ENCODE measurements at regions of chr3 and their contacts with region 1.

Region 1: GRCh38 chr3:138594150-138594934 is at the start of gene CEP70:
- DNase-seq: peak; percentile 96
- H3K4me3 ChIP-seq: peak within 1 kb of the TSS; percentile 65
- H3K27ac ChIP-seq: peak within 1 kb of the TSS; percentile 78
- H3K4me1 ChIP-seq: peaks cover 3% of the 10 kb centered on the region
- H3K27me3 ChIP-seq: no peaks in the 10 kb centered on the region
- CTCF ChIP-seq: peak; percentile 90
- total RNA-seq, gene CEP70: 25.6 and 30.8 TPM in 2 replicates

Region 2: DNA sequence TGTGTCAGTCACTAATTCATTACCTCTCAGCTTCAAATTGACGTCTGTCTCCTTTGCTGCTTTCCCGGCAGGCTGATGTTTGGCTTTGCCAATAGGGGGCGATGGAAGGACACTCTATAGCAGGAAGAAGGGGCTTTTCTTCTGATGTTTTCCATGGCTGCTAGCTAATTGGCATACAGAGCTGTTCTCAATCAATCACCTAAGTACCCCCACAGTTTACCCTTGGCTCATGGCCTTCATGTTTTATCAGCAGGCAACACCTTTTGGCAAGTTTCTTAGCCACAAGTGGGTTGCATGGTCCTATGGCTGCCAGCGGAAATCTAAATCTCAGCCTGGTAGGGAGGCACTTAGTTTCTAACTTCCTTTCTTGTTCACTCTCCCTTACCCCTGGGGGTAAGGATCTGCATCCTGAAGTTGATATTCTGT is 114.9 kb before region 1 on chr3:
- CTCF ChIA-PET with region 1: no interaction called
- POLR2A ChIA-PET with region 1: no interaction called
- intact Hi-C with region 1: loop called (anchors 5 kb)
- DNase-seq: peak; percentile 71
- H3K4me3 ChIP-seq: no peak overlapping the region
- H3K27ac ChIP-seq: no peak overlapping the region
- H3K4me1 ChIP-seq: no peaks in the 10 kb centered on the region
- H3K27me3 ChIP-seq: no peaks in the 10 kb centered on the region
- CTCF ChIP-seq: peak; percentile 92

Region 3: DNA sequence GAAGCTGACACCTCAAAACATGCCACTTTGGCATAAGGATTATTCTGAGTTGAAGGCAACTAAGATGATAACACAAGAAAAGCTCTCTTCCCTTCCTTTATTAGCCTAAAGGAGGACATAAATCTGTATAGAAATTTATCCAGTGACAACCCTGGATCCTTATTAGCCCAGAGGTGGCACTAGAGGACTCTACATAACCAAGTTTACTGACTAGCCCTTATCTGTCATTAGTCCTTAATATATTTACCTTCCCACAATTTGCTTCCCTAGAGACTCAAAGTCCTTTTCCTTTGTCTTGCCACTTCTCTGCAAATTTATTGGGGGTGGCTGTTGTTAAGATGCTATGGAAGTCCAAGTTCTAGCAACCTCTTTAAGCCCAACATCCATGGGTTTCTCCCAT is 26.9 kb before region 1 on chr3:
- CTCF ChIA-PET with region 1: no interaction called
- POLR2A ChIA-PET with region 1: no interaction called
- intact Hi-C with region 1: no loop called
- DNase-seq: no peak
- H3K4me3 ChIP-seq: no peak overlapping the region
- H3K27ac ChIP-seq: no peak overlapping the region
- H3K4me1 ChIP-seq: no peaks in the 10 kb centered on the region
- H3K27me3 ChIP-seq: no peaks in the 10 kb centered on the region
- CTCF ChIP-seq: no peak

Region 4: GRCh38 chr3:138915503-138916498 is 321.5 kb after region 1 on chr3:
- CTCF ChIA-PET with region 1: interaction called, 38 read pairs
- POLR2A ChIA-PET with region 1: interaction called, 7 read pairs
- intact Hi-C with region 1: loop called (anchors 1 kb)
- DNase-seq: peak; percentile 92
- H3K4me3 ChIP-seq: peak overlapping the region; percentile 86
- H3K27ac ChIP-seq: peak overlapping the region; percentile 77
- H3K4me1 ChIP-seq: no peaks in the 10 kb centered on the region
- H3K27me3 ChIP-seq: no peaks in the 10 kb centered on the region
- CTCF ChIP-seq: peak; percentile 84

Region 5: DNA sequence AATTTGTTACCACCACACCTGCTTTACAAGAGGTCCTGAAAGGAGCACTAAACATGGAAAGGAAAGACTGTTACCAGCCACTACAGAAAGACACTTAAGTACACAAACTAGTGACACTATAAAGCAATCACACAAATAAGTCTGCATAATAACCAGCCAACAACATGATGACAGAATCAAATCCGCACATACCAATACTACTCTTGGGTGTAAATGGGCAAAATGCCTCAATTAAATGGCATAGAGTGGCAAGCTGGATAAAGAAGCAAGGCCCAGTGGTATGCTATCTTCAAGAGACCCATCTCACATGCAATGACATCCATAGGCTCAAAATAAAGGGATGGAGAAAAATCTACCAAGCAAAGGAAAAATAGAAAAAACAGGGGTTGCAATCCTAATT is 557.2 kb after region 1 on chr3:
- CTCF ChIA-PET with region 1: no interaction called
- POLR2A ChIA-PET with region 1: no interaction called
- intact Hi-C with region 1: no loop called
- DNase-seq: no peak
- H3K4me3 ChIP-seq: no peak overlapping the region
- H3K27ac ChIP-seq: no peak overlapping the region
- H3K4me1 ChIP-seq: no peaks in the 10 kb centered on the region
- H3K27me3 ChIP-seq: no peaks in the 10 kb centered on the region
- CTCF ChIP-seq: no peak

Region 6: GRCh38 chr3:139302084-139302800 is 707.9 kb after region 1 on chr3:
- CTCF ChIA-PET with region 1: interaction called, 15 read pairs
- POLR2A ChIA-PET with region 1: no interaction called
- intact Hi-C with region 1: no loop called
- DNase-seq: no peak
- H3K4me3 ChIP-seq: no peak overlapping the region
- H3K27ac ChIP-seq: no peak overlapping the region
- H3K4me1 ChIP-seq: no peaks in the 10 kb centered on the region
- H3K27me3 ChIP-seq: no peaks in the 10 kb centered on the region
- CTCF ChIP-seq: no peak